ENCODE measurements at regions of chr6 and their contacts with region 1.

Region 1: GRCh38 chr6:159540152-159540551 is 152.9 kb downstream of the SOD2 start:
- DNase-seq: peak; percentile 82
- ATAC-seq: peak; percentile 93
- H3K4me3 Mint-ChIP-seq: no peak overlapping the region
- H3K27ac Mint-ChIP-seq: no peak overlapping the region
- H3K4me1 Mint-ChIP-seq: peaks cover 10% of the 10 kb centered on the region
- H3K27me3 Mint-ChIP-seq: peaks cover 12% of the 10 kb centered on the region
- CTCF ChIP-seq: peak; percentile 66

Region 2: DNA sequence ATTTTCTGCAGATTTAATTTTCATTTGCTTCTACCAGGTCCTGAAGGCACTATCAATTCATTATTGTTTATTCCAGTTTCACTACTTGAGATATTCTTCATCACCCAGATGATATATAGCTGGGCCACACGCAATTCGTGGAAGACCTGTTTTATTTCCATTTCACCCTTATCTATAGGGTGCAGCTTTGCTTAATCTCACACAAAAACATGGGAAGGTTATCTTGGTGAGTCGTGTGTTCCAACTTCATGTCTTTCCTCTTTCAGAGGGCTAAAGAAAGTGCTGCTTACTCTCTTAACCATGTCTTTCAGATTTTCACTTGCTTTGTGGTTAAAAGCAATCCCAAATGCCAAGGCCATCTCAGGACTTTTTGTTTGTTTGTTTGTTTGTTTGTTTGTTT is 41.1 kb before region 1 on chr6:
- CTCF ChIA-PET with region 1: no interaction called
- POLR2A ChIA-PET with region 1: no interaction called
- DNase-seq: no peak
- ATAC-seq: no peak
- H3K4me3 Mint-ChIP-seq: no peak overlapping the region
- H3K27ac Mint-ChIP-seq: no peak overlapping the region
- H3K4me1 Mint-ChIP-seq: 0 out of 2 replicates have a peak, but pooled peaks cover 2% of the 10 kb centered on the region
- H3K27me3 Mint-ChIP-seq: peaks cover 2% of the 10 kb centered on the region; the same call in 1 of the 2 replicates
- CTCF ChIP-seq: no peak

Region 3: DNA sequence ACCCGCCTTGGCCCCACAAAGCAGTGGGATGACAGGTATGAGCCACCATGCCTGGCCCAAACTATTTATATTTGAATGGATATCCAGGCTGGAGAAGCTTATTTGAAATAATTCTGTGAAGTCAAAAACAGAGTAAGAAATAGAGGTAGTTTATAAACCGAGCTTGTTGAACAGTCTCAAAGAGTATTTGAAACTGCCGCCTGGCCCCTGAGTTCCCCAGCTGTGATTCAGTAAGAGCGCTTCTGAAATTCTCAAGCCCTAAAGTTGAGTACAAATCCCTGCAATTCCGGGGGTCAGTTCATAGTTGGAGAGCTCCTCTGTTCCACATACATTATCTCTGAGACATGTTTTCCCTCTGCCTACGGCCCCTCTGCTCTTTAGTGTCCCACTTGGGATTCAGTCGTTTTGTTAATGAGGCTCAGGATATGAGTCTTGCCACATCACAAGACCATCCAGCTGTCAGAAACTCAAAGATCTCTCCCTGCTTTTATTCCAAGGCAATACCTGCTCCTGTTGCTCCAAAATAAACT is 25.1 kb after region 1 on chr6:
- CTCF ChIA-PET with region 1: interaction called, 12 read pairs
- POLR2A ChIA-PET with region 1: no interaction called
- DNase-seq: no peak
- ATAC-seq: no peak
- H3K4me3 Mint-ChIP-seq: no peak overlapping the region
- H3K27ac Mint-ChIP-seq: no peak overlapping the region
- H3K4me1 Mint-ChIP-seq: no peaks in the 10 kb centered on the region
- H3K27me3 Mint-ChIP-seq: peaks cover 4% of the 10 kb centered on the region
- CTCF ChIP-seq: no peak

Region 4: GRCh38 chr6:159595173-159595572 is 55.0 kb after region 1 on chr6:
- CTCF ChIA-PET with region 1: interaction called, 14 read pairs
- POLR2A ChIA-PET with region 1: no interaction called
- DNase-seq: no peak
- ATAC-seq: no peak
- H3K4me3 Mint-ChIP-seq: no peak overlapping the region
- H3K27ac Mint-ChIP-seq: no peak overlapping the region
- H3K4me1 Mint-ChIP-seq: no peaks in the 10 kb centered on the region
- H3K27me3 Mint-ChIP-seq: no peaks in the 10 kb centered on the region
- CTCF ChIP-seq: no peak

Region 5: DNA sequence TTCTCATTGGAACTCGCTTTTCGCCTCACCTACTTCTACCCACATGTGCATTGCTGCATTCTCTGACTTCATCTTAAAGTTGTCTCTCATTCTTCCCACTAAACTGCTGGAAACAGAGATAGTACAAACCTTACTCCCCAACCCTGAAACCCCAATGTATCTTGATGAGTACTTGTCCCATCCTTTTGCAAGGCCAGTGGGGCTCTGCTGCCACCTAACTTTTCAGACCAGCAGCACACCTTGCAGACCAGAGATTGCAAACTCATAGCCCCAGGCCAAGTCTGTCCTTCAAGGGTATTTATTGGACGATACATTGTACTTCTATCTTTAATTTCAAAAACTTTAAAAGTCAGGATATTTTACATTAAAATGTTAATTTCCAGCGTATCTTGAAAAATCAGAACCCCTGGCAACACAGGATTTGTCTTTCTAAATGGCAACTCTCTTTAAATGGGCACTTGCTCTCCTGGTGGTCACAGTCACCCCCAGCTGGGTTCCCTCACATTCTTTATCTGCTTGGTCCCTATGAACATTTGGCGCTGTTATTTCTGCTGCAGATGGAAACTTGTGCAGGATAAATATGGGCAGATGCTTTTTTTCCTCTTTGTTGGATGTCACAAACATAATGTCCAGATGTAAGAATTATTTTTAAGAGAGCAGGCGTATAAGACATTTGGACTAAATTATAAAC is 69.0 kb after region 1 on chr6:
- CTCF ChIA-PET with region 1: interaction called, 10 read pairs
- POLR2A ChIA-PET with region 1: no interaction called
- DNase-seq: peak; percentile 70
- ATAC-seq: peak; percentile 96
- H3K4me3 Mint-ChIP-seq: no peak overlapping the region
- H3K27ac Mint-ChIP-seq: no peak overlapping the region
- H3K4me1 Mint-ChIP-seq: no peaks in the 10 kb centered on the region
- H3K27me3 Mint-ChIP-seq: no peaks in the 10 kb centered on the region
- CTCF ChIP-seq: peak; percentile 47; the same call in 1 of the 2 replicates